GM18951 (cell line): ENCODE measurements at regions of chr12 and their contacts with region 1.

Region 1: DNA sequence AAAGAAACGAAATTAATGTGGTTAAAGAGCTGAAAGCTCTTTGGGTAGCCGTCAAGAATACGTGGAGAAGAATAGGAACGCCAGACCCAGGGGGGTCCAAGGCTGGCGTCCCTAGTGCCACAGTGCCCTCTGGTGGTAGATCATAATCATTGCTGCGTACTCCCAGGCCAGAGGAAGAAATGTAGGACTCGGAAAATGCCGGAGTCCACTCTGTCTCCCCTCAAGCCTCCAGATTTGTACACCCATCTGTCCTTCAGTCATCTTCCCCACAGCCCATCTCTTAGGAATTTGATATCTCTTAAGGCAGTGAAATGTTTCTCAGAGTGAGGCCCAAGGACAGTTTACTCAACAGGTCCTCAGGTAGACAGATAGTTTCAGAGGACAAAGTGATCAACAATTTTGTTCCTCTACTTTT is 25.4 kb upstream of the PLEKHG6 start:
- POLR2A ChIP-seq: no peak

Region 2: GRCh38 chr12:5988659-5989116 is 296.4 kb before region 1 on chr12:
- in situ Hi-C with region 1: loop called (anchors 10 kb)
- POLR2A ChIP-seq: no peak

Region 3: GRCh38 chr12:6062757-6063735 is 222.0 kb before region 1 on chr12:
- in situ Hi-C with region 1: loop called (anchors 10 kb)
- POLR2A ChIP-seq: no peak